Mammary epithelial cell (primary cell): ENCODE measurements at regions of chr13 and their contacts with region 1.

Region 1: DNA sequence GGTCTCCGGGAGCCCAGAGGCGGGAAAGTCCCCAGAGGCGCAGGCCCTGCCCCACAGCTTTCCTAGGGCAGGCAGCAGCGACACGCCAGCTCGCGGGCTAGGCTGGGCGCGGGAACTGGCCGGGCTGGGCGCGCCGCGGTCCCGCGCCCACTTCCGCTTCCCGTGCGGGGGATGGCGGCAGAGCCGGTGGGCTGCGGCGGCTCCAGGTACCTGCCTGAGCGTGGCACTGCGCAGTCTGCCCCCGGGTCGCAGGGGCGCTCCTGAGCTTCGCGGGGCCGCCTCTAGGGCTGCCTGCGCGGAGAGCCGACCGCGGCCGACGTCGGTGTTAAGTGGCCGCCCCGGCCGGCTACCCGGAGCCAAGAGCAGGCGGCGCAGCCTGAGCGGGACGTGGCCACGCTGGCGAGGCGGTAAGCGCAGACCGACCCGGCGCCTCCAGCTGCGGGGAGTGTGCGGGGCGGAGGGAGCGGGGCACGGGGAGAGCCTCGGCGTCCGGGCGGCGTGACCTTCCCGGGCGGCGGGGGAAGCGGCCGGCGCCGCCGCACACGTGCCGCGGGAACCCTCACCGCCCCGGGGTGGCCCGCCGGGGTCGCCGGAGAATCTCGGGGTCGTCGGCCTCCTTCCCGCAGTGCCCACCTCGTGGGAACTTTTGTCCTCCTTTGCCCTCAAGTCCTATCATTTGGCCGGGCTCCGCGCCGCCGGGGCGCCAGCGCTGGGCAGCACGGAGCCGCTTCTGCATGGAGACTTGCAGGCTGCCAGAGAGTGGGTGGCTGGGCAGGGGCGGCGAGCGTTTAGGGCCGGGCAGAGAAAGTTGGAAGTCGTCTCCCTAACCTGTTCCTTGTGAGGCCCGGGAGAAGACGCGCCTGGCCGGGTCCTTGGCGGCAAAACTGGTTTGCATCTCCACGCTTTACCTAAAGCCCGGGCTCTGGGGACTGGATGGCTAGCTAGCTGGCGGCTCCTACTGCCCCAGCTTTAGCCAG is 31.4 kb upstream of the MPHOSPH8 start:
- DNase-seq: peak; percentile 48
- H3K4me3 ChIP-seq: peak overlapping the region; percentile 46 to 70 (median 65)
- H3K27ac ChIP-seq: peak overlapping the region; percentile 29
- H3K4me1 ChIP-seq: peaks cover 34% of the 10 kb centered on the region
- H3K27me3 ChIP-seq: no peaks in the 10 kb centered on the region
- CTCF ChIP-seq: peak; percentile 11 to 18

Region 2: GRCh38 chr13:19633479-19634255 is 31.6 kb after region 1 on chr13 and contains the start of gene MPHOSPH8:
- CTCF ChIA-PET with region 1: interaction called, 21 read pairs
- dilution Hi-C with region 1: no loop called
- in situ Hi-C with region 1: no loop called
- intact Hi-C with region 1: no loop called
- DNase-seq: peak; percentile 95
- H3K4me3 ChIP-seq: peak within 1 kb of the TSS; percentile 55 to 92 (median 75)
- H3K27ac ChIP-seq: peak within 1 kb of the TSS; percentile 33
- H3K4me1 ChIP-seq: no peaks in the 10 kb centered on the region
- H3K27me3 ChIP-seq: no peaks in the 10 kb centered on the region
- CTCF ChIP-seq: no peak
- total RNA-seq, gene MPHOSPH8: 10.0 to 27.3 TPM

Region 3: DNA sequence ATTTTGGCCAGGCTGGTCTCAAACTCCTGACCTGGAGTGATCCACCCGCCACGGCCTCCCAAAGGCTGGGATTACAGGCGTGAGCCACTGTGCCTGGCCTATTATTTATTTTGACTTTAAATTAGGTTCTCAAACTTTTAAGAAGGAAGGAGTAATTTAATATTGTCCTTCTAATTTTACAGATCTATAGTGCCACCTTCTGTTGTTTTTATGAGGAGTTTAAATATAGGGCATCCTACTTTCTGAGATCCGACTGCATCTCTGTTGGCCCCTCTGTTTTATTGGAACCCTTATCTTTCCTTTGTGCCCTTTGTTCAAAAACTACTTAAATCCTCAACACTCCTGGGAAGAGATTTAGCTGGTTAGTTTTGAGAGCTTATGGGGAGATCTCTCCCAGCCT is 286.8 kb after region 1 on chr13:
- CTCF ChIA-PET with region 1: interaction called, 10 read pairs
- dilution Hi-C with region 1: no loop called
- in situ Hi-C with region 1: no loop called
- intact Hi-C with region 1: no loop called
- DNase-seq: peak; percentile 6
- H3K4me3 ChIP-seq: no peak overlapping the region
- H3K27ac ChIP-seq: no peak overlapping the region
- H3K4me1 ChIP-seq: no peaks in the 10 kb centered on the region
- H3K27me3 ChIP-seq: no peaks in the 10 kb centered on the region
- CTCF ChIP-seq: peak in 1 of 2 donors; percentile 20